HEK293 (cell line): ENCODE measurements at regions of chr1 and their contacts with region 1.

Region 1: GRCh38 chr1:15332952-15333715 is 76.6 kb upstream of the EFHD2 start:
- H3K4me3 ChIP-seq: no peak overlapping the region
- H3K27ac ChIP-seq: no peak overlapping the region
- H3K4me1 ChIP-seq: peaks cover 7% of the 10 kb centered on the region
- CTCF ChIP-seq: no peak

Region 2: DNA sequence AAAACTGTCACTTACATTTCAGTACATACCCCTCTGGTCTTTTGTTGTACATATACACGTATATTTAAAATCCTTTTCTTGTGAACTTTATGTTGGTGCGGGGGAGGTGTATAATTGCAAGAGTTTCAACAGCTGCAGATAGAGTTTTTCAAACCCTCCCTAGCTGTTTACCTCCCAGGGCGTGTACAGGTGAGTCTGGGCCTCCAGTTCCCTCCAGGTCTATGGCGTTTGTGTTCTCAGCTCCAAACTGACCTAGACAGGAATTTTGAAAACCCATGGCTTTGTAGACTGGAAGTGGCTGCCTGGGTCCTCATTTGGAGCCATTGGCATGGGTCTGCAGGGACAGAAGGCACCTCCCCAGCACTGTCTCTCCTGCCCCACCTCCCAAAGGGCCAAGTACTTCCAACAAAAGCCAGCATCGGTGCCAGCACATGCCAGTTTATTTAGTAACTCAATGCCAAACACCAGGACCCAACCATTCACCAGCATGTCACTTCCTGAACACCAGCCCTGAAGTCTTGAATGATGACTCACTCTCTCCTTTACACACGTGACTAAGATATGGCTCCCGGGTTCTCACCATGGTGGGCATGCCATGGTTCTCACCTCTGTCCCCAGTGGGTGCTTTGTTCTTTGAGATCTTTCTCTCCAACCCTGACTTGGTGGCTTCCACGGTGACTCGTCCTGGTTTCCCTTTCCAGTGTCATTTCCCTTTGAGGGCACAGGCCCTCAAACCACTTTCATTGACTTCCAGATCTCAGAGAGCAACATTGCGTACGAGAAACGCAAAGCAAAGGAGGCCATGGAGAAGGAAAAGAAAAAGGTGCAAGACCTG is 19.2 kb after region 1 on chr1:
- CTCF ChIA-PET with region 1: no interaction called
- POLR2A ChIA-PET with region 1: no interaction called
- H3K4me3 ChIP-seq: no peak overlapping the region
- H3K27ac ChIP-seq: no peak overlapping the region
- H3K4me1 ChIP-seq: no peaks in the 10 kb centered on the region
- CTCF ChIP-seq: no peak

Region 3: DNA sequence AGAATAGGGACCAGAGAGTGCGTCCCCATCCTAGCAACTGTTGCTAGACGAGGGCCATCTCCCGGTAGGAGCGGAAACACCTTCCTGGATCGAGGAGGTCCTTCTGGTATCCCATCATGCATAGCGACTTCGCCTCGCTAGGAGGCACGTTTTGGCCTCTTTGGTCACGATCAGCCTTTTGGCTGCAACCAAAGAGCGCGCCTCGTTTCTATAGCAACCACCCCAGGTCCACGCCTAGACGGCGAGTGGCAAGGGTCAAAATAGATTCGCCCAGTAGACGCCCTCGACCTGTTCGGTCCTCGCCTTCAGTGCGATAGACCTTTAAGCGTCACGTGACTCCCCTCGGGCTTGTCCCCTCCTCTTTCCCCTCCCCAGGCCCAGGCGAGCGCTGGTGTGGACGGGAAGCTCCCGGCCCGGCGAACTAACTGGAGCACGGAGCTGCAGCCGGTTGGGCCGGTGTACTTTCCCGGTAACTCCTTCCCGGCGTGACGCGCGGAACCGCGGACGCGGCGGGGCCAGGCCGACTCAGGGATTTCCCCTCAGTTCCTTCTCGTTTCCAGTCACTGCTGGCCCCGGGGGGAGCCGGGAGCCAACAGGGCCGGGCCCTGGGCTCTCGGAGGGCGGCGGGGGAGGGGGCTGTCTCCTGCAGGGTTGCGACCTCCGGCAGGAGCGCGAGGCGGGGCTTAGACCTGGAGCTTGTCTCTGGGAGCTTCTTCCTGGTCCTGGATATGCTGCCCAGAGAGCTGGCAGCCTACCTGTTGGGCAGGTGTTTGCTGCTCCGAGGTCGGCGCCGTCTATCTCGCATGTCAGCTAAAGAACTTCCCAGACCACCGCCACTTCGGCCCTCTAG is 193.6 kb after region 1 on chr1 and contains the start of gene DNAJC16:
- CTCF ChIA-PET with region 1: no interaction called
- POLR2A ChIA-PET with region 1: interaction called, 10 read pairs
- H3K4me3 ChIP-seq: peak within 1 kb of the TSS; percentile 82
- H3K27ac ChIP-seq: peak within 1 kb of the TSS; percentile 60; the same call in 1 of the 2 replicates
- H3K4me1 ChIP-seq: peaks cover 7% of the 10 kb centered on the region
- CTCF ChIP-seq: peak; percentile 68; the same call in 1 of the 2 replicates